ENCODE measurements at regions of chr9 and their contacts with region 1.

Region 1: DNA sequence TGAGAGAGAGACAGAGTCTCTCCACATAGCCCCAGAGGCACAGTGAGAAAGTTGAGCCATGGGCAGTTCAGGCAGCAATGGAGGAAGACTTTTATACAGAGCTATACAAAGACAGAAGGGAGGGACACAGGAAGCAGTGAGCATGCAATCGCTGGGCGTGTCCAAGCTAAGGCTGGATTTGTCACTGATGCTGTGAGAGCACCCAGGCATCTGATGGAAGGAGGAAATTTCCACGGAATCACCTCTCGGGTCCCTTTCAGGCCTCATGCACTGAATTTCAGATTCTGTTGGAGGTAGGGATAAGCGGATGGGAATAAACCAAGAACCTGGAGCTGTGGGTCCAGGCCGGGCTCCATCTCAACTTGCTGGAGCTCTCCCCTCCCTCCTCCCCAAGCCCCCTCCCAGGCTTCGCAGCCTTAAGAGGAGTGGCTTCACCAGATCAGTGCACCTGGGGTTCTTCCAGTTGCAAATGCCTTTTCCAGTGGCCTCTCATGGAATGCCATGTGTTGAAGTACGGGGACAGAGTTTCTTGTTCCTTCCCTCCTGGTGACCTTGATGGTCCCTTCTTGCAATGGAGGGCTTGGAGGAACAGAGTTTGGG is 114.8 kb upstream of the ALDH1B1 start:
- DNase-seq: no peak
- H3K4me3 ChIP-seq: no peak overlapping the region
- H3K4me3 Mint-ChIP-seq: no peak overlapping the region
- H3K27ac Mint-ChIP-seq: no peak overlapping the region
- H3K4me1 ChIP-seq: no peaks in the 10 kb centered on the region
- H3K4me1 Mint-ChIP-seq: no peaks in the 10 kb centered on the region
- H3K27me3 ChIP-seq: no peaks in the 10 kb centered on the region
- H3K27me3 Mint-ChIP-seq: peaks cover 11% of the 10 kb centered on the region
- CTCF ChIP-seq: no peak

Region 2: DNA sequence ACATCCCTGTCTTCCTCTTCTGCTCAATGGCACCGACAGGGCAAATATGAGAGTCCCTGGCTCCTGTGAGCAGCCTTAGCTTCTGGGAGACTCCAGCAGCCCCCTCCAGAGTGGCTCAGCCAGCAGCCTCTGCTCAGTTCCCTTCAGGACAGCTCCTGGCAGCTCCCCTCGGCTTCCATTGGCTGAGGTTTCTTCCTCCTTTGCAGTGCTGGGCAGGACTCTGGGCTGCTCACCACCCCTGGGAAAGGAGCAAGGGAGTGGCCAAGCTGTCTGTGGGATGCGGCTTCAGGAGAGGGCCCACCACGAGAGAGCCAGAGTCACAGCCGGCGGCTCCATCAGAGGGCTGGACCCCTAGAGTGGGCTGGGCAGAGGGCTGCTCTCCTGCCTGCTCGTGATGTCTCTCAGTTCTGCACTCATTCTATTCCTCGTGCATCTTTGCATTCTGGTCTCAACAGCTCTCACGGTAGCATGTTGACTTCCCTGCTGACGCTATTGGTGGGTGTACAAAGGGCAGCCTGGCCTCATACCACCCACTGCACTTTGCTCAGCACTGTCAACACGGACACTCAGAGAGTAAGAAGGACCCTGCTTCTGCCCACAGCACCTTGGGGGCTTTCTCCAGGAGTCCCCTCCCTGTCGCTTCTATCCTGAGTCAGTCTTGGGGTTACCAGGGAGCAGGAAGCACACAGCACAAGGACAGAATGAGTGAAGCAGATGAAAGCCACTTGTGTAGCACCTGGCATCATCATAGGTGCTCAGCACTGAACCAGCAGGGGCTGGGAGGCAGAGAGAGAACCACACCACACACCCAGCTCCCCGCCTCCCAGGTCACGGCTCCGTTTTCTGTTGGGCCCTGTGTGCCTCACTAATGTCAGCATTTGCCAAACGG is 33.9 kb after region 1 on chr9:
- CTCF ChIA-PET with region 1: no interaction called
- POLR2A ChIA-PET with region 1: no interaction called
- intact Hi-C with region 1: loop called (anchors 5 kb)
- DNase-seq: peak; percentile 15 to 48
- H3K4me3 ChIP-seq: peak overlapping the region; percentile 21; the same call in 1 of the 2 replicates
- H3K4me3 Mint-ChIP-seq: no peak overlapping the region
- H3K27ac Mint-ChIP-seq: no peak overlapping the region
- H3K4me1 ChIP-seq: peaks cover 8% of the 10 kb centered on the region; the same call in 1 of the 2 replicates
- H3K4me1 Mint-ChIP-seq: no peaks in the 10 kb centered on the region
- H3K27me3 ChIP-seq: no peaks in the 10 kb centered on the region; the same call in 1 of the 2 replicates
- H3K27me3 Mint-ChIP-seq: peaks cover 7% of the 10 kb centered on the region
- CTCF ChIP-seq: no peak

Region 3: GRCh38 chr9:38380872-38381534 is 103.3 kb after region 1 on chr9:
- CTCF ChIA-PET with region 1: no interaction called
- POLR2A ChIA-PET with region 1: no interaction called
- intact Hi-C with region 1: no loop called
- DNase-seq: peak; percentile 81 to 90
- H3K4me3 ChIP-seq: no peak overlapping the region
- H3K4me3 Mint-ChIP-seq: peak overlapping the region; percentile 52
- H3K27ac Mint-ChIP-seq: peak overlapping the region; percentile 94
- H3K4me1 ChIP-seq: peaks cover 31% of the 10 kb centered on the region
- H3K4me1 Mint-ChIP-seq: peaks cover 13% of the 10 kb centered on the region
- H3K27me3 ChIP-seq: no peaks in the 10 kb centered on the region
- H3K27me3 Mint-ChIP-seq: no peaks in the 10 kb centered on the region
- CTCF ChIP-seq: no peak

Region 4: GRCh38 chr9:38408719-38409118 is 131.0 kb after region 1 on chr9:
- CTCF ChIA-PET with region 1: no interaction called
- POLR2A ChIA-PET with region 1: no interaction called
- intact Hi-C with region 1: no loop called
- DNase-seq: no peak
- H3K4me3 ChIP-seq: no peak overlapping the region
- H3K4me3 Mint-ChIP-seq: no peak overlapping the region
- H3K27ac Mint-ChIP-seq: no peak overlapping the region
- H3K4me1 ChIP-seq: peaks cover 11% of the 10 kb centered on the region
- H3K4me1 Mint-ChIP-seq: peaks cover 11% of the 10 kb centered on the region
- H3K27me3 ChIP-seq: no peaks in the 10 kb centered on the region
- H3K27me3 Mint-ChIP-seq: peaks cover 5% of the 10 kb centered on the region
- CTCF ChIP-seq: no peak

Region 5: GRCh38 chr9:38467404-38467803 is 189.7 kb after region 1 on chr9:
- CTCF ChIA-PET with region 1: no interaction called
- POLR2A ChIA-PET with region 1: no interaction called
- intact Hi-C with region 1: no loop called
- DNase-seq: no peak
- H3K4me3 ChIP-seq: no peak overlapping the region
- H3K4me3 Mint-ChIP-seq: no peak overlapping the region
- H3K27ac Mint-ChIP-seq: no peak overlapping the region
- H3K4me1 ChIP-seq: no peaks in the 10 kb centered on the region
- H3K4me1 Mint-ChIP-seq: peaks cover 6% of the 10 kb centered on the region
- H3K27me3 ChIP-seq: no peaks in the 10 kb centered on the region
- H3K27me3 Mint-ChIP-seq: no peaks in the 10 kb centered on the region
- CTCF ChIP-seq: no peak

Measured in Caco-2 (cell line).